Spleen (tissue), 13 donors: ENCODE measurements at regions of chr6 and their contacts with region 1.

Region 1: GRCh38 chr6:41790045-41790444 is 2.6 kb downstream of the TOMM6 start:
- DNase-seq: no peak
- H3K4me3 ChIP-seq: no peak overlapping the region
- H3K27ac ChIP-seq: no peak overlapping the region
- H3K4me1 ChIP-seq: peaks cover 19 to 49% (median 36%) of the 10 kb centered on the region in 6 donors
- H3K27me3 ChIP-seq: no peaks in the 10 kb centered on the region
- CTCF ChIP-seq: no peak
- POLR2A ChIP-seq: no peak

Region 2: DNA sequence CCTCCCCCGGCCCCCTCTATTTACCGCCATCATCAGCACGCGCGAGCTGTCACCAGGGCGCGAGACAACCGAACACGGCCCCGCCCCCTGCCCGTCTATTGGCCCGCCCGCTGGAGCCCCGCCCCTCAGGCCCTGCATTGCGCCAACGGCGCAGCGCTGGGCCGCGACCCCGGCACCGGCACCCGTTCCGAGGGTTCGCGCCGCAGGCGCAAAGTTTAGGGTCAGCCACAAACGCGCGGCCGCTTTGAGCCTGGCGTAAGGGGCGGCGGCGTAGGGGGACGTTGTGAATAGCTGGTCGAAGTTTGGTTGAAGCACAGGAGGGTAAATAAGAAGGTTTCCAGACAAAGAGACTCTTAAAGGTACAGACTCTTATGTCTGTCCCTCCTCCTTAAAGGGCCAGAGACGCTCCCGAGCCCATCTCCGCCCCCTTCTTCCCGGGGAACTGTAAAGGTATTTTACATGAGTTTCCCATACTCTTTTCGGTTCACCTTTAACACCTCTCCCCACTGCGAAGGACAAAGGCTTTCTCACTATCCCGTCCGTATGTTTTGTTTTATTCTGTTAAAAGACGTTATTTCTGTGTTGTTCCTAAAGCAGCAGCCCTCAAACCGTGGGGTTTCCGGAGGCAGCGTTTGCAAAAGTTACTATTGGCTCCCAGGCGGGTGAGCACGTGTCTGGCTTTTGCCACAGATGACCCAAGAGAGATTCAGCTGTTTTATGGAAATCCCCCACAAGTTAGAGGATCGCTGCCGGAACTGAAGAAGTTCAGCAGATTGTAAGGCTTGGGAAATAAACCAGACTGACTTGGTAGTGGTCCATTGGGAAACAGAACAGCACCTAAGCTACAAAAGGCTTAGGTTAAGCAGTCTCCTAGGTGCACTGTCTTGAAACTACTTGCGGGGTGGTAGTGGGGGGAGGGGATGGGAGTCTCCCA is 105.5 kb after region 1 on chr6 and contains the start of gene USP49:
- intact Hi-C with region 1: loop called (anchors 10 kb)
- DNase-seq: peak; percentile 96
- H3K4me3 ChIP-seq: peak within 1 kb of the TSS; percentile 72 to 91 (median 78)
- H3K27ac ChIP-seq: peak within 1 kb of the TSS; percentile 61 to 91 (median 87)
- H3K4me1 ChIP-seq: peaks cover 5 to 41% (median 25%) of the 10 kb centered on the region in 6 donors
- H3K27me3 ChIP-seq: no peaks in the 10 kb centered on the region
- CTCF ChIP-seq: no peak
- POLR2A ChIP-seq: no peak
- total RNA-seq, gene USP49: 2.9 to 6.8 (median 4.7) TPM